ENCODE measurements at regions of chr12 and their contacts with region 1.

Region 1: GRCh38 chr12:9647825-9648700 is 21.4 kb upstream of the CLEC2D start:
- DNase-seq: peak; percentile 94 to 96 (median 94)
- H3K4me3 ChIP-seq: peak overlapping the region; percentile 91 to 99
- H3K4me3 Mint-ChIP-seq: peak overlapping the region; percentile 94 to 100 (median 99)
- H3K27ac ChIP-seq: peak overlapping the region; percentile 83
- H3K27ac Mint-ChIP-seq: peak overlapping the region; percentile 85 to 99 (median 97)
- H3K4me1 ChIP-seq: peaks cover 62% of the 10 kb centered on the region
- H3K4me1 Mint-ChIP-seq: peaks cover 39 to 66% (median 50%) of the 10 kb centered on the region in 4 donors
- H3K27me3 ChIP-seq: no peaks in the 10 kb centered on the region
- H3K27me3 Mint-ChIP-seq: no peaks in the 10 kb centered on the region

Region 2: GRCh38 chr12:9615420-9616136 is 32.5 kb before region 1 on chr12:
- CTCF ChIA-PET with region 1: interaction called, 9 read pairs
- POLR2A ChIA-PET with region 1: interaction called, 48 read pairs
- intact Hi-C with region 1: no loop called
- DNase-seq: peak; percentile 39 to 85 (median 76)
- H3K4me3 ChIP-seq: peak overlapping the region in 1 of 2 donors; percentile 46
- H3K4me3 Mint-ChIP-seq: peak overlapping the region; percentile 80 to 94 (median 88)
- H3K27ac ChIP-seq: peak overlapping the region; percentile 84
- H3K27ac Mint-ChIP-seq: peak overlapping the region; percentile 95 to 100 (median 98)
- H3K4me1 ChIP-seq: peaks cover 63% of the 10 kb centered on the region
- H3K4me1 Mint-ChIP-seq: peaks cover 61 to 97% (median 75%) of the 10 kb centered on the region in 4 donors
- H3K27me3 ChIP-seq: no peaks in the 10 kb centered on the region
- H3K27me3 Mint-ChIP-seq: no peaks in the 10 kb centered on the region

Region 3: GRCh38 chr12:9662500-9662899 is 14.4 kb after region 1 on chr12:
- CTCF ChIA-PET with region 1: interaction called, 4 read pairs
- POLR2A ChIA-PET with region 1: interaction called, 881 read pairs
- intact Hi-C with region 1: loop called (anchors 1 kb)
- DNase-seq: no peak
- H3K4me3 ChIP-seq: no peak overlapping the region
- H3K4me3 Mint-ChIP-seq: peak overlapping the region in 7 of 8 donors; percentile 37 to 72 (median 54)
- H3K27ac ChIP-seq: peak overlapping the region; percentile 41
- H3K27ac Mint-ChIP-seq: peak overlapping the region; percentile 68 to 94 (median 85)
- H3K4me1 ChIP-seq: peaks cover 91% of the 10 kb centered on the region
- H3K4me1 Mint-ChIP-seq: peaks cover 65 to 84% (median 76%) of the 10 kb centered on the region in 4 donors
- H3K27me3 ChIP-seq: no peaks in the 10 kb centered on the region
- H3K27me3 Mint-ChIP-seq: no peaks in the 10 kb centered on the region

Region 4: DNA sequence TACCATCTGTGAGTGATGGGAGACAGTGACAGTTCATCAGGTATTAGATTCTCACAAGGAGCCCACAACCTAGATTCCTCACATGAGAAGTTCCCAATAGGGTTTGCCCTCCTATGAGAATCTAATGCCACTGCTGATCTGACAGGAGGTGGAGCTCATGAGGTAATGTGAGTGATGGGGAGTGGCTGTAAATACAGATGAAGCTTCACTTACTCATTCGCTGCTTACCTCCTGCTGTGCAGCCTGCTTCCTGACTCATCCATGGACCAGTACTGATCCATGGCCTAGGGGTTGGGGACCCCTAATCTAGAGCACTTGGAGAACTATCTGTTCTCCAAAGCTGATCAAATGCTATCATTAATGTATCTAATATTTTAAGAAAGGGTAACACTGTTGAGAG is 39.2 kb after region 1 on chr12:
- CTCF ChIA-PET with region 1: no interaction called
- POLR2A ChIA-PET with region 1: interaction called, 850 read pairs
- intact Hi-C with region 1: loop called (anchors 5 kb)
- DNase-seq: peak in 1 of 5 donors; percentile 50
- H3K4me3 ChIP-seq: no peak overlapping the region
- H3K4me3 Mint-ChIP-seq: peak overlapping the region in 5 of 8 donors; percentile 10 to 54 (median 44)
- H3K27ac ChIP-seq: no peak overlapping the region
- H3K27ac Mint-ChIP-seq: peak overlapping the region in 6 of 7 donors; percentile 29 to 83 (median 64)
- H3K4me1 ChIP-seq: peaks cover 73% of the 10 kb centered on the region
- H3K4me1 Mint-ChIP-seq: peaks cover 45 to 72% (median 65%) of the 10 kb centered on the region in 4 donors
- H3K27me3 ChIP-seq: no peaks in the 10 kb centered on the region
- H3K27me3 Mint-ChIP-seq: no peaks in the 10 kb centered on the region

Region 5: GRCh38 chr12:9760699-9761418 is 112.8 kb after region 1 on chr12 and contains the start of gene CD69:
- CTCF ChIA-PET with region 1: no interaction called
- POLR2A ChIA-PET with region 1: interaction called, 149 read pairs
- intact Hi-C with region 1: loop called (anchors 2 kb)
- DNase-seq: peak; percentile 87 to 93 (median 90)
- H3K4me3 ChIP-seq: peak within 1 kb of the TSS; percentile 71 to 80
- H3K4me3 Mint-ChIP-seq: peak within 1 kb of the TSS; percentile 87 to 100 (median 98)
- H3K27ac ChIP-seq: peak within 1 kb of the TSS; percentile 98
- H3K27ac Mint-ChIP-seq: peak within 1 kb of the TSS; percentile 98 to 100 (median 100)
- H3K4me1 ChIP-seq: peaks cover 59% of the 10 kb centered on the region
- H3K4me1 Mint-ChIP-seq: peaks cover 42 to 70% (median 51%) of the 10 kb centered on the region in 4 donors
- H3K27me3 ChIP-seq: no peaks in the 10 kb centered on the region
- H3K27me3 Mint-ChIP-seq: no peaks in the 10 kb centered on the region
- total RNA-seq, gene CD69: 31.0 to 35.9 TPM

Region 6: DNA sequence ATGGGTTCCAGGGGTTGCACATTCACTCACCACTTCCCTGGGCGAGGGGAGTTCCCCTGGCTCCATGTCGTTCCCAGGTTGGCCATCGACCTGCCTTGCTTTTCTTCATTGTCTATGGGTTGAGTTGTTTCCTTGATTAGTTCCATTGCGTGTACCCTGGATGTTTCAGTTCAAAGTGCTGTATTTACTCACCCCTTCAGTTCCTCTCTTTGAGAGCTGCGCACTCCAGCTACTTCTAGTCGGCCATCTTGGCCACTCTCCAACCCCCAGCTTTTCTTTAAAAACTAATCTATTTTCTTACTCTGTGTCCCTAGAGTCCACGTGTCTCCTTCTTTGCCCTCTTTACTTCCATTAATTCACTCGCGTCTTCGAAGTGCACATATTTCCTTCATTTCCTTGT is 272.4 kb after region 1 on chr12:
- CTCF ChIA-PET with region 1: no interaction called
- POLR2A ChIA-PET with region 1: no interaction called
- intact Hi-C with region 1: no loop called
- DNase-seq: no peak
- H3K4me3 ChIP-seq: no peak overlapping the region
- H3K4me3 Mint-ChIP-seq: no peak overlapping the region
- H3K27ac ChIP-seq: no peak overlapping the region
- H3K27ac Mint-ChIP-seq: peak overlapping the region in 1 of 7 donors; percentile 49
- H3K4me1 ChIP-seq: no peaks in the 10 kb centered on the region
- H3K4me1 Mint-ChIP-seq: peaks cover 1 to 6% (median 5%) of the 10 kb centered on the region in 4 donors
- H3K27me3 ChIP-seq: no peaks in the 10 kb centered on the region
- H3K27me3 Mint-ChIP-seq: peaks cover 0 to 3% of the 10 kb centered on the region in 2 donors

Region 7: DNA sequence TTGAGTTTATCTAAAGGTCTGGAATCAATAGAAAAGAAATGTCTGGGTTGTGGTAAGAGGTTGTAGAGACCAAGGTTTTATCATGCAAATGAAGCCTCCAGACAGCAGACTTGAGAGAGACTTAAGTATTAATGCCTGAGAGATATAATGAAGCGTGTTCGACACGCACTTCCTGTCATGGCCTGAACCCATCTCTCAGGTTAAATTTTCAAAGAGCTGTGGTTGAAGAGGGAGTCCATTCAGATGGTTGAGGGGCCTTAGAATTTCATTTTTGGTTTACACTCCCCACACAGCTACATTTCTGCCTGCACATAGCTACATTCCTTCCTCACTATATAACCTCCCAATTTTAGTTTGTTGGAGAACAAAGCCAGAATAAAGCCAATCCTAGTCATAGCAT is 313.0 kb after region 1 on chr12:
- CTCF ChIA-PET with region 1: no interaction called
- POLR2A ChIA-PET with region 1: no interaction called
- intact Hi-C with region 1: no loop called
- DNase-seq: no peak
- H3K4me3 ChIP-seq: no peak overlapping the region
- H3K4me3 Mint-ChIP-seq: no peak overlapping the region
- H3K27ac ChIP-seq: no peak overlapping the region
- H3K27ac Mint-ChIP-seq: no peak overlapping the region
- H3K4me1 ChIP-seq: peaks cover 15% of the 10 kb centered on the region
- H3K4me1 Mint-ChIP-seq: peaks cover 15 to 30% (median 25%) of the 10 kb centered on the region in 4 donors
- H3K27me3 ChIP-seq: no peaks in the 10 kb centered on the region
- H3K27me3 Mint-ChIP-seq: no peaks in the 10 kb centered on the region